ENCODE measurements at regions of chr20 and their contacts with region 1.

Region 1: DNA sequence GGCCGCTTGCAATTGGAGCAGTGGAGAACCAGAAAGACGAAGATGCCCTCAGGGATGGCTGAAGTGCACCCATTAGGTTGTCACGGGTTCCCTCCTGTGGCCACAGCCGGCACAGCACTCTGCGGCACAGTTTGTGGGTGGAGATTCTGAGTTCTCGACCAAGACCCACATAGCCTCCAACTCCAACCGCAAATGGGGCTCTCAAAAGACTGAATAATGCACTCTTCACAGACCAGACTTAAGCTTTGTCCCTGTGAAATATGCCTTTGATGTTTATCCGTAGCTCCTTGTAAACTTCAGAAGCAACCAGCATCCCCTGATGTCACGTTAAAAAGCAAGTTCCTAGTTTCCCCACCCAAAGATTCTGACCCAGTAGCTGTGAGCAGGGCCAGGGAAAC is 934 bp upstream of the CST9 start:
- DNase-seq: peak; percentile 81
- ATAC-seq: peak; percentile 95
- H3K4me3 Mint-ChIP-seq: no peak overlapping the region
- H3K27ac Mint-ChIP-seq: no peak overlapping the region
- H3K4me1 Mint-ChIP-seq: peaks cover 6% of the 10 kb centered on the region
- H3K27me3 Mint-ChIP-seq: peaks cover 5% of the 10 kb centered on the region

Region 2: DNA sequence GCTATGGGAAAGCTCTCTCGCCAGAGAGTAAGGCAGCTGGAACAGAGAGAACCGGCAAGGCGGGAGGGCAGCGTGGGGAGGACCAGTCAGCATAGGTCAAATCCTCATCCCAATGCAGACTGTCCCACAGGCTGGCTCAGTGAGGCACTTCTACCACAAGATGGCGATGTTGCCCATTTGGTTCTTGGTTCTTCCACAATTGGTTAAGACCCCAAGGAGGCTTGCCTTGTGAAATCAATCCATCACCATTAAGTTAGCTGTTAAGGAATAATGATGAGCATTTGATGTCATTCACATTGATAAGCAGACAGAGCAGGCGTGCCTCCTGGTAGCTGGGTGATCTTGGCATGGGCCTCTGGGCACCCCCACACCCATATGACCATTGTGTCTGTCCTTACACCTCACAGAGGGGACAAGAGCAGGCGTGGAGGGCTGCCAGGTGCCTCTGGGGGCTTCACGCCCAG is 164.8 kb before region 1 on chr20:
- CTCF ChIA-PET with region 1: interaction called, 56 read pairs
- POLR2A ChIA-PET with region 1: no interaction called
- DNase-seq: peak; percentile 84
- ATAC-seq: peak; percentile 90
- H3K4me3 Mint-ChIP-seq: no peak overlapping the region
- H3K27ac Mint-ChIP-seq: no peak overlapping the region
- H3K4me1 Mint-ChIP-seq: peaks cover 2% of the 10 kb centered on the region
- H3K27me3 Mint-ChIP-seq: peaks cover 6% of the 10 kb centered on the region

Region 3: GRCh38 chr20:23459461-23460150 is 147.0 kb before region 1 on chr20:
- CTCF ChIA-PET with region 1: no interaction called
- POLR2A ChIA-PET with region 1: no interaction called
- DNase-seq: no peak
- ATAC-seq: no peak
- H3K4me3 Mint-ChIP-seq: no peak overlapping the region
- H3K27ac Mint-ChIP-seq: no peak overlapping the region
- H3K4me1 Mint-ChIP-seq: peaks cover 26% of the 10 kb centered on the region
- H3K27me3 Mint-ChIP-seq: peaks cover 8% of the 10 kb centered on the region

Measured in activated CD8-positive, alpha-beta T cell treated with anti-CD3 and anti-CD28 coated beads, Interleukin-2, amount 10 ng/mL, durations not matched to agents 7 days and 5 days (primary cell).